ENCODE measurements at regions of chr16 and their contacts with region 1.

Region 1: DNA sequence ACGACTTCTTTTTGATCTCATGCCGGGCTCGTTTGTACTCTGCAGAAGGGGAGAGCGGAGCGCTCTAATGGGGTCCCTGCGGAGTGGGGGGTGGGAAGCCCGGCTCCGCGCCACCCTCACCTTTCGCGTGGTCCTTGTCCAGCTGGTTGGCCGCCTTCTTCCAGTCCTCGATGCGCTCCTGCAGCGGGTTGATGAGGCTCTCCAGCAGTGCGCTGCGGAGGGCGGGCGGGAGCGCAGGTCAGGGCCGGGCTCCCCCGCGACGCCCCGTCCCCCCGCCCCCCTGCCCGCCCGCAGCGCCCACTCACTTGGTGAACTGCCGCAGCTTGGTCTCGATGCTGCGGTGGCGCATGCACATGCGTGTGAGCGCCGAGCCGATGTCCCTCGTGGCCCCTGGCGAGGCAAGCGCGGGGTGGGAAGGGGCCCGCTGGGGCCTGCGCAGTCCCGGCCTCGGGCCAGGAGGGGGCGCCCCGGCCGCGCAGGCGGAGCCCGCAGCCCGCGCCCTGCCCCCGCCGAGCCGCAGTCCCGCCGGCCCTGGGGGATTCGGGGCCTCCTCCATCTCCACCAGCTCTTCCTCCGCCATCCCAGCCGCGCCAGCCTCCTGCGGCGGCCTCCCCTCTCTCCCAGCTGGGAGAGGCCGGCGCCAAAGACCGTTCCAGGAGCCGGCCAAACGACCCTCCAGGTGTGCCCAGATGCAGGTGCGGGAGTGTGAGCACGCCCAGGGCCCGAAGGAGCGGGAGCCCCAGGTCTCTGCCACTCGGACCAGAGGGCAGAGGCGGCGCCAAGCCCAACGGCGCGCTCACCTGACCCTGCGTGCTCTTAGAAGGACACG is 6.0 kb downstream of the MTSS2 start:
- DNase-seq: no peak
- H3K4me3 ChIP-seq: peak overlapping the region; percentile 12 to 21
- H3K27ac ChIP-seq: no peak overlapping the region
- H3K4me1 ChIP-seq: peaks cover 30% of the 10 kb centered on the region
- H3K27me3 ChIP-seq: no peaks in the 10 kb centered on the region
- CTCF ChIP-seq: peak; percentile 65 to 69 (median 66)
- POLR2A ChIP-seq: no peak

Region 2: GRCh38 chr16:70364399-70364798 is 315.5 kb before region 1 on chr16:
- intact Hi-C with region 1: no loop called
- DNase-seq: no peak
- H3K4me3 ChIP-seq: no peak overlapping the region
- H3K27ac ChIP-seq: no peak overlapping the region
- H3K4me1 ChIP-seq: no peaks in the 10 kb centered on the region
- H3K27me3 ChIP-seq: no peaks in the 10 kb centered on the region
- CTCF ChIP-seq: no peak
- POLR2A ChIP-seq: no peak

Region 3: DNA sequence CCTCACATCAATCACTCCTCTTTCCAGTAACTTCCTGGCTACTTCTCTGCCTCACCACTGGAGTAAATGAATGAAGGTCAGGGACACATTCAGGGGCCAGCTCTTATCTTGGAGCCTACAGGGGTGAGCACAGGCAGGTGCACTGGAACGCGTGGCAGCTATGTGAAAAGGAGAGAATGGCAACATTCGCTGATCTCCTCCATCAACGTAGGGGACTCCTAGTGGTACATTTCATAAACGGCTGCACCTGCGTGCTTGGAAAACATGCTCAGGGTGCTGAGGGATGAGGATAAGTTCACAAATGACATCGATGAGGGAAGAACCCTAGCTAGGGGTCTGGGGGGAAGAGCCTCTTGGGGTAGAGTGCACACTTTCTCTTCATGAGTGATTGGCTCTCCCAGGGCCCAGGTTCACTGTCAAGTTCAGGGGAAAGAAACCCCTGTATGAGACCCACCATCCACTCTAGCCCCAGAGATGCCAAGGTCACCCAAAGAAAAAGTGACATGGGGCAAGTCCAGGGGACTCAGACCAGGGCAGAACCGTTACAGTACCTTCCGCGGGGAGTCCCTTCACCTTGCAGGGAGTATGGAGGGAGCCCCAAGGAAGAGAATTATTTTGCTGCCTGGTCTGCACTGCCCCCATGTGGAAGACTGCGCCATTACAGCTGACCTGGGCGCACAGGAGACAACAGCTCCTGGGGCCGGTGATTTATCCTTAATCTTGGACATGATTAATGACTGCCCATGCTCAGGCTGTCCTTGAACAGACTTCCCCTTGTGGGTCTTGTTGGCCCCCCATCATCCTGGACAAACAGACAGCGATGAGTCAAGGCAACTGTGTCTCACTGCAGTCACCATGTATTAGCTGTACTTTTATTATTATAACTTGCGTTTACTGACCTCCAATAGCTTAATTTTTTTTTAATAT is 91.0 kb after region 1 on chr16:
- intact Hi-C with region 1: loop called (anchors 5 kb)
- DNase-seq: peak; percentile 71
- H3K4me3 ChIP-seq: no peak overlapping the region
- H3K27ac ChIP-seq: no peak overlapping the region
- H3K4me1 ChIP-seq: no peaks in the 10 kb centered on the region
- H3K27me3 ChIP-seq: no peaks in the 10 kb centered on the region
- CTCF ChIP-seq: peak; percentile 80 to 98 (median 91)
- POLR2A ChIP-seq: no peak

Measured in testis (tissue), 5 donors.